Activated CD4-positive, alpha-beta memory T cell treated with anti-CD3 and anti-CD28 coated beads, Interleukin-2, amount 10 ng/mL, durations not matched to agents 7 days and 5 days (primary cell): ENCODE measurements at regions of chr9 and their contacts with region 1.

Region 1: DNA sequence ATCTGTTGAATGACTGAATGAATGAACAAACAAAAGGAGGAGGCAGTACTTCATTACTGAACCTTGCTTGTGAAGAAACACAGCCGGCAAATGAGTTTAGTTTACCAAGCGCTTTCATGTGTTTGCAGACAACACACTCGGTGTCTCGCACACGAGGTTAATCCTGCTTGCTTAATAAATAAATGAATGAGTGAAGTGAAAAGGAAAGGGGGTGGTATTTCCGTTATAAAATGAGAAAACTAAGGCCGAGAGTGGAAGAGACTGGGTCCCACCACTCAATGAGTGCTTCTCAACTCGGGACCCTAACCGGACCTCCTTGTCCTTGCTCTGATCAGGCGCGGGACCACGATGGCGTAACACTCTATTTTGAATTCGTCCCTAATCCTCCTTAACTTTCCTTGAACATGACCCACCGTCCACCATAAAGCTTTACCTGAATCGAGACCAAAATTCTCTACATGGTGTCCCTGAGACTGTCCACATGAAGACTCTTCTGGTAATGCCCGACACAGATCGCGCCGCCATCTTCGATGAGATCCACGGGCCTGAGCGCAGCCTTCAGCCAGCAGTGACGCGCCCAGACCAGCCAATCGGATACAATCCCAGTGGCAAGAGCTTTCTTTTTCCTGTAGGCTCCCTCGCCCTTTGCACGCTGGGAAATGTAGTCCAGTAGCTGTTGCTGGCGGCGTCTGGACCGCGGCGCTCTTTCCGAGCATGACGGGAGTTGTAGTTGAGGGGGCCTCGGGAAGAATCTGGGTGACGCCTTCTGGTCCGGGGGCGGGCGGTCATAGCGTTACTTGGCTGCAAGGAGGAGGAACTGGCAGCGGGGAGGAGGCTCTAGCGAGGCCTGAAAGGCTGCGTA is at the starts of genes MRPL50 and ZNF189:
- DNase-seq: peak; percentile 98
- H3K4me3 Mint-ChIP-seq: peak within 1 kb of the TSS; percentile 98
- H3K27ac Mint-ChIP-seq: peak within 1 kb of the TSS; percentile 93
- H3K4me1 Mint-ChIP-seq: peaks cover 51% of the 10 kb centered on the region
- H3K27me3 Mint-ChIP-seq: no peaks in the 10 kb centered on the region
- total RNA-seq, gene MRPL50: 9.2 to 10.2 TPM
- total RNA-seq, gene ZNF189: 13.1 to 13.3 TPM

Region 2: GRCh38 chr9:100990605-100991381 is 407.5 kb before region 1 on chr9:
- CTCF ChIA-PET with region 1: no interaction called
- POLR2A ChIA-PET with region 1: no interaction called
- DNase-seq: no peak
- H3K4me3 Mint-ChIP-seq: no peak overlapping the region
- H3K27ac Mint-ChIP-seq: no peak overlapping the region
- H3K4me1 Mint-ChIP-seq: no peaks in the 10 kb centered on the region
- H3K27me3 Mint-ChIP-seq: no peaks in the 10 kb centered on the region

Region 3: DNA sequence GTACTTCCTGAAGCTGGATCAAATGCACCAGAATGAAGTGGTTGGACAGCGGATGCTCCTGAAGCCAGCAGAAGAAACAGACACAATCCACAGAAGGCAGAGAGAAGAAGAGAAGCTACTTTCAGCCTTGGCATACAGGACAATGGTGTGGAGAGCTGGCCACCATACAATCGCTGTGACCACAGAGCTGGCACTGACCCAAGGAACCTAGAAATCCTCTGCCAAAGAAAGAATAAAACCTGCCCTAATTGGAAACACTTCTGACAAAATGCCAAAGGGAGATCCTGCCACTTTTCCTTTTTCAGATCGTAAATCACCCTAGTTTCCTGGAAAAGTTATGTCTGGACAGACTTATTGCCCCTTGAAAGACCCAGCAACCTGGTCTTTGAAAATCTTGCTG is 91.2 kb before region 1 on chr9:
- CTCF ChIA-PET with region 1: no interaction called
- POLR2A ChIA-PET with region 1: no interaction called
- DNase-seq: no peak
- H3K4me3 Mint-ChIP-seq: no peak overlapping the region
- H3K27ac Mint-ChIP-seq: no peak overlapping the region
- H3K4me1 Mint-ChIP-seq: no peaks in the 10 kb centered on the region
- H3K27me3 Mint-ChIP-seq: peaks cover 1% of the 10 kb centered on the region

Region 4: DNA sequence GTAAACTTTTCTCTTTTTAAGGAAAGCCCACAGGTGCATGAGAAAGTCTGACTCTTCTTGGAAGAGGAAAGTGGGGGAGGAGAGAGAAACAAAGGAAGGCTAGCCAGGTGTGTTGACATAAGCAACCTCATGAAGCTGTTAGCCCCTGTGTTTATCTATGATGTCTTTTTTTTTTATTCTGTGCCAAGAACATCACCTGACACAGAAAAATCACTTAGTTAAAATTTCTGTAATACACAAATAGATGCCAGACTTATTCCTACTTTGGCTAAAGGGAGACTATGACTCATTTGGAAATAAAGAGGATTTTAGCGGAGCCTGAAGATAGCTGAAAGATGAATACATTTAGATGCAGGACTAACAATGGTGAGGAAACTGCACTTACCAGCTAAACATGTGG is 71.8 kb before region 1 on chr9:
- CTCF ChIA-PET with region 1: no interaction called
- POLR2A ChIA-PET with region 1: no interaction called
- DNase-seq: no peak
- H3K4me3 Mint-ChIP-seq: no peak overlapping the region
- H3K27ac Mint-ChIP-seq: no peak overlapping the region
- H3K4me1 Mint-ChIP-seq: no peaks in the 10 kb centered on the region
- H3K27me3 Mint-ChIP-seq: peaks cover 4% of the 10 kb centered on the region

Region 5: GRCh38 chr9:101366038-101366756 is 32.1 kb before region 1 on chr9:
- CTCF ChIA-PET with region 1: no interaction called
- POLR2A ChIA-PET with region 1: no interaction called
- DNase-seq: no peak
- H3K4me3 Mint-ChIP-seq: no peak overlapping the region
- H3K27ac Mint-ChIP-seq: no peak overlapping the region
- H3K4me1 Mint-ChIP-seq: no peaks in the 10 kb centered on the region
- H3K27me3 Mint-ChIP-seq: no peaks in the 10 kb centered on the region

Region 6: GRCh38 chr9:101387871-101388506 is 10.3 kb before region 1 on chr9:
- CTCF ChIA-PET with region 1: interaction called, 16 read pairs
- POLR2A ChIA-PET with region 1: interaction called, 8 read pairs
- DNase-seq: no peak
- H3K4me3 Mint-ChIP-seq: no peak overlapping the region
- H3K27ac Mint-ChIP-seq: no peak overlapping the region
- H3K4me1 Mint-ChIP-seq: peaks cover 8% of the 10 kb centered on the region
- H3K27me3 Mint-ChIP-seq: peaks cover 2% of the 10 kb centered on the region